ENCODE measurements at regions of chr5 and their contacts with region 1.

Region 1: GRCh38 chr5:140244525-140245025 is 58.3 kb downstream of the PFDN1 start:
- DNase-seq: no peak
- ATAC-seq: peak; percentile 63
- H3K4me3 ChIP-seq: no peak overlapping the region
- H3K27ac ChIP-seq: no peak overlapping the region
- H3K4me1 ChIP-seq: peaks cover 25 to 33% of the 10 kb centered on the region in 2 experiments
- H3K27me3 ChIP-seq: no peaks in the 10 kb centered on the region
- CTCF ChIP-seq: peak in 2 of 3 experiments; percentile 72 to 81; a peak in 4 of 6 replicates
- POLR2A ChIP-seq: no peak
- RAD21 ChIP-seq: no peak

Region 2: GRCh38 chr5:140094889-140095288 is 149.7 kb before region 1 on chr5:
- CTCF ChIA-PET with region 1: no interaction called
- POLR2A ChIA-PET with region 1: no interaction called
- RAD21 ChIA-PET with region 1: no interaction called
- intact Hi-C with region 1: no loop called
- DNase-seq: no peak
- ATAC-seq: no peak
- H3K4me3 ChIP-seq: no peak overlapping the region
- H3K27ac ChIP-seq: no peak overlapping the region
- H3K4me1 ChIP-seq: no peaks in the 10 kb centered on the region
- H3K27me3 ChIP-seq: no peaks in the 10 kb centered on the region
- CTCF ChIP-seq: no peak
- POLR2A ChIP-seq: no peak
- RAD21 ChIP-seq: no peak

Region 3: GRCh38 chr5:140169410-140169809 is 75.2 kb before region 1 on chr5:
- CTCF ChIA-PET with region 1: interaction called, 19 read pairs
- POLR2A ChIA-PET with region 1: no interaction called
- RAD21 ChIA-PET with region 1: interaction called, 3 to 6 read pairs
- intact Hi-C with region 1: no loop called
- DNase-seq: no peak
- ATAC-seq: peak; percentile 83
- H3K4me3 ChIP-seq: no peak overlapping the region
- H3K27ac ChIP-seq: no peak overlapping the region
- H3K4me1 ChIP-seq: peaks cover 3 to 16% of the 10 kb centered on the region in 2 experiments; a peak in 3 of 4 replicates
- H3K27me3 ChIP-seq: no peaks in the 10 kb centered on the region
- CTCF ChIP-seq: peak; percentile 21 to 65 (median 34); a peak in 3 of 6 replicates
- POLR2A ChIP-seq: no peak
- RAD21 ChIP-seq: peak; percentile 78

Region 4: DNA sequence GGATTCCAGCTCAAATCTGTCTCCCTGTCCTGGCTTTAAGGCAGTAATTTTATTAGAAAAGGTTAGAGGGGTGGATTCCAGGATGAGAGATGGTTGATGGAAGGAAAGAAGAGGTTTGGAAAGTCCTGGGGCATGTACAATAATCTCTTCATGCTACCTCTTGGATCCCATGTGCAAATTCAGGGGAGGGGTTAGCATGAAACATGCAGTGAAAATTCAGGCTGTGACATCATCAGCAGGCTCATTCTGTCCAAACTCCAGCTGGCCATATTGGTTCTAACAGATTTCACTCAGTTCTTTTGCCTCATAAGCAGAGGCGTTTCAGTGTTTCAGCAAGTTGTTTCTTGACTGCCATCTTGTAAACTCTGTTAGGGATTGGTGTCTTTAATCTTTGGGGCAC is 14.2 kb before region 1 on chr5:
- CTCF ChIA-PET with region 1: interaction called, 14 read pairs
- POLR2A ChIA-PET with region 1: no interaction called
- RAD21 ChIA-PET with region 1: no interaction called
- intact Hi-C with region 1: no loop called
- DNase-seq: no peak
- ATAC-seq: no peak
- H3K4me3 ChIP-seq: no peak overlapping the region
- H3K27ac ChIP-seq: no peak overlapping the region
- H3K4me1 ChIP-seq: peaks cover 0 to 5% of the 10 kb centered on the region in 2 experiments; a peak in 1 of 4 replicates
- H3K27me3 ChIP-seq: no peaks in the 10 kb centered on the region
- CTCF ChIP-seq: no peak
- POLR2A ChIP-seq: no peak
- RAD21 ChIP-seq: no peak

Region 5: GRCh38 chr5:140351609-140352334 is 107.2 kb after region 1 on chr5:
- CTCF ChIA-PET with region 1: interaction called, 76 read pairs
- POLR2A ChIA-PET with region 1: interaction called, 57 read pairs
- RAD21 ChIA-PET with region 1: interaction called, 5 to 20 read pairs
- intact Hi-C with region 1: loop called (anchors 1 kb)
- DNase-seq: peak; percentile 61
- ATAC-seq: peak; percentile 86
- H3K4me3 ChIP-seq: no peak overlapping the region
- H3K27ac ChIP-seq: no peak overlapping the region
- H3K4me1 ChIP-seq: peaks cover 7 to 23% of the 10 kb centered on the region in 2 experiments; a peak in 3 of 4 replicates
- H3K27me3 ChIP-seq: no peaks in the 10 kb centered on the region
- CTCF ChIP-seq: peak in 2 of 3 experiments; percentile 83 to 96; a peak in 4 of 6 replicates
- POLR2A ChIP-seq: no peak
- RAD21 ChIP-seq: no peak

Region 6: DNA sequence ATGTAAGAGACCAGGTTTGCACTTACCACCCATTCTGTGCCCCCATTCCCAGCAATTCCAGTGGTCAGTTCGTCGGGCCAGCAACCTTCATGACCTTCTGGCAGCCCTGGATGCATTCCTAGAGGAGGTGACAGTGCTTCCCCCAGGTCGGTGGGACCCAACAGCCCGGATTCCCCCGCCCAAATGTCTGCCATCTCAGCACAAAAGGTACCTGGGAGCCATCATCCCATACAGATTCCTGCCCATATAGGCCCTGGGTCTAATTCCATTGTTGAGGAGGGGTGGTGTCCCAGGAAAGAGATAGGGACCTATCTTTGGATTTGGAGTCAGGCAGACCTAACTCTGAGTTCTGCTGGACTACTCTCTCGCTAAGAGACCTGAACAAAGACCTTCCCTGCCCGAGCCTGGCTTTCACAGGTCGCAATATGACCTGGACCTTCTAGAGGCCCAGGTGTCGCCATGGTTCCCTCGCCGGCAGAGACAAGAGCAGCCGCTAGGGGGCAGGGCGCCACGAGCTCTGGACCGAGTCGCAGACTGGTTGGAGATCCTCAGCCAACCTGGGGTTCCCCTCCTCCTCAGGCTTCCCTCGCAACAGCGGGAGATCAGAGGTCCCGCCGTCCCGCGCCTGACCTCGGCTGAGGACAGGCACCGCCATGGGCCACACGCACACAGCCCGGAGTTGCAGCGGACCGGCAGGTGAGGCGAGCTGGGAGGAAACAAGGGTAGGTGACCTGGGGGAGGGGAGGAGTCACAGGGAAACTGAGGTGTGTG is 118.5 kb after region 1 on chr5:
- CTCF ChIA-PET with region 1: interaction called, 186 read pairs
- POLR2A ChIA-PET with region 1: interaction called, 16 read pairs
- RAD21 ChIA-PET with region 1: interaction called, 15 to 17 read pairs
- intact Hi-C with region 1: no loop called
- DNase-seq: peak; percentile 65
- ATAC-seq: peak; percentile 90
- H3K4me3 ChIP-seq: peak overlapping the region; percentile 31 to 49
- H3K27ac ChIP-seq: no peak overlapping the region; the same call in 1 of the 2 replicates
- H3K4me1 ChIP-seq: peaks cover 3 to 38% of the 10 kb centered on the region in 2 experiments; a peak in 3 of 4 replicates
- H3K27me3 ChIP-seq: no peaks in the 10 kb centered on the region
- CTCF ChIP-seq: peak in 2 of 3 experiments; percentile 94 to 99; a peak in 4 of 6 replicates
- POLR2A ChIP-seq: no peak
- RAD21 ChIP-seq: no peak

Measured in HCT116 (cell line).